HepG2 (cell line): ENCODE measurements at regions of chr5 and their contacts with region 1.

Region 1: DNA sequence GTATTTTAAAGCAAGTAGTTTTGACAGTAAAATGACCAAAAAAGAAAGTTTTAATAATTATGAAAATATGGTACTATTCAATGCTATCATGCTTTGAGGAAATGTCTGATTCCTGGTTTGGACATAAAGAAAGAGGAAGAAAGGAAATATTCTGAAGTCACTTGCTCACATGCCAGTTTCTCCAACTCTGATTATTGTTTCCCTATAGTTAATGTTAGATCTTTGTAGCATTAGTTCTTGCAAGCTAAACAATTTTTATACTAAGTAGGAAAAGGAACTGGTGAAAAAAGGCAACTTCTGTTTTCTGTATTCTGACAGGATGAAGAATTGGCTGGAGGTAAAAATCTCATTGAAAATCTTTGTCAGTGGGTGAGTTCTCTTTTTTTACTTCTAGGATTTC is 119.5 kb downstream of the YTHDC2 start:
- DNase-seq: no peak
- ATAC-seq: no peak
- H3K4me3 ChIP-seq: no peak overlapping the region
- H3K27ac ChIP-seq: no peak overlapping the region
- H3K4me1 ChIP-seq: no peaks in the 10 kb centered on the region
- H3K27me3 ChIP-seq: no peaks in the 10 kb centered on the region
- CTCF ChIP-seq: no peak
- EP300 ChIP-seq: no peak
- POLR2A ChIP-seq: no peak
- RAD21 ChIP-seq: no peak

Region 2: GRCh38 chr5:113969901-113970300 is 336.9 kb after region 1 on chr5:
- CTCF ChIA-PET with region 1: no interaction called
- POLR2A ChIA-PET with region 1: no interaction called
- in situ Hi-C with region 1: no loop called
- intact Hi-C with region 1: no loop called
- DNase-seq: no peak
- ATAC-seq: no peak
- H3K4me3 ChIP-seq: no peak overlapping the region
- H3K27ac ChIP-seq: no peak overlapping the region
- H3K4me1 ChIP-seq: no peaks in the 10 kb centered on the region
- H3K27me3 ChIP-seq: no peaks in the 10 kb centered on the region
- CTCF ChIP-seq: no peak
- EP300 ChIP-seq: no peak
- POLR2A ChIP-seq: no peak
- RAD21 ChIP-seq: no peak

Region 3: GRCh38 chr5:114999176-114999575 is 1366.2 kb after region 1 on chr5:
- CTCF ChIA-PET with region 1: no interaction called
- POLR2A ChIA-PET with region 1: no interaction called
- in situ Hi-C with region 1: no loop called
- intact Hi-C with region 1: loop called (anchors 5 kb)
- DNase-seq: no peak
- ATAC-seq: no peak
- H3K4me3 ChIP-seq: no peak overlapping the region
- H3K27ac ChIP-seq: no peak overlapping the region
- H3K4me1 ChIP-seq: no peaks in the 10 kb centered on the region
- H3K27me3 ChIP-seq: no peaks in the 10 kb centered on the region
- CTCF ChIP-seq: no peak
- EP300 ChIP-seq: no peak
- POLR2A ChIP-seq: no peak
- RAD21 ChIP-seq: no peak